ENCODE measurements at regions of chr13 and their contacts with region 1.

Region 1: DNA sequence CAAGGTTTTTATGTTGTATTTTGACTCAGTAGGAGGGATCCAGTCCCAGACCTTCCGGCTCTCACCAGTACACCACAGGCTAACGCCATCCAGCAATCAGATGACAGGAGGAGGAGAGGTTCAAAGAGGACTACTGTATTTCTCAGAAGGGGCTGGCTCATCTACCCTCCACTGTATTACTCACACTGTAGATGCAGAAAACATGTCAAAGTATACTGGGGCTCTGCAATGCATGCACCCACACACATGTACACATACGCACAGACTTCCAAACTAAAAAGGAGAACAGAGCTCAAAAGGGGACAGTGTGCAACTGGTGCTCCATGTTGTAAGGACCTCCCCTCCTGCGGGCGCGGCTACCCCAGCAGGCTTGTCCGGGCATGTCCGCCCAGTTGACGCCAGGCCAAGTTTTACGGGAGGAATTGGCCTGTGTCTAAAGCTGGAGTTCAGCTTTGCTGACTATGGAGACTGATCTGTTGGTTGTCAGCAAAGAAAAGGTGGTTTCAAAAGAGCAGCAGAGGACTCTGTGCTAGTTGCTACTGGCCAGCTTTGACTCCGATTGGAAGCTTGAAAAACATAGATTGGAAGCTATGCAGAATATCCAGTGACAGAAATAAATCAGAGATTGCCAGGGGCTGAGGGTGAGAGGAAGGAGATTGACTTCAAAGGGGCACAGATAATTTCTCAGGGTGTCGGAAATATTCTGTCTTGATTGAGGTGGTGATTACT is 314.2 kb downstream of the DLEU7 start:
- DNase-seq: peak; percentile 94
- ATAC-seq: peak; percentile 95

Region 2: DNA sequence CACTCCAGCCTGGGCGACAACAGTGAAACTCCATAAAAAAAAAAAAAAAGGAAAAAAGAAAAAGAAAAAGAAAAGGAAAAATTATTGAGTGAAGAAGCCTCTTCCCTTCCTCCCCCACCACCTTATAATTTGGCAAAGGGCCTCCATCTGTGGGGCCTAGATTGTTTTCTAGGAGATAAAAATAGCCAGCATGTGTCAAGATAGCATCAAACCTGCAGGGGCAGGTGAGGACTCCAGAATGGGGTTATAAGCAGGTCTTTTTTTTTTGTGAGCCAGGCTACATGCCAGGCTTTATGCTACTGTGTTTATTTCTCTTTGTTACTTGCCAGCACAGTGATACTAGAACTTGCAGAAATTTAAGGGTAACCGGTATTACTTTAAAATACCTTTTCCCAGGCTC is 544.2 kb before region 1 on chr13:
- intact Hi-C with region 1: loop called (anchors 10 kb)
- DNase-seq: no peak
- ATAC-seq: peak; percentile 46

Region 3: DNA sequence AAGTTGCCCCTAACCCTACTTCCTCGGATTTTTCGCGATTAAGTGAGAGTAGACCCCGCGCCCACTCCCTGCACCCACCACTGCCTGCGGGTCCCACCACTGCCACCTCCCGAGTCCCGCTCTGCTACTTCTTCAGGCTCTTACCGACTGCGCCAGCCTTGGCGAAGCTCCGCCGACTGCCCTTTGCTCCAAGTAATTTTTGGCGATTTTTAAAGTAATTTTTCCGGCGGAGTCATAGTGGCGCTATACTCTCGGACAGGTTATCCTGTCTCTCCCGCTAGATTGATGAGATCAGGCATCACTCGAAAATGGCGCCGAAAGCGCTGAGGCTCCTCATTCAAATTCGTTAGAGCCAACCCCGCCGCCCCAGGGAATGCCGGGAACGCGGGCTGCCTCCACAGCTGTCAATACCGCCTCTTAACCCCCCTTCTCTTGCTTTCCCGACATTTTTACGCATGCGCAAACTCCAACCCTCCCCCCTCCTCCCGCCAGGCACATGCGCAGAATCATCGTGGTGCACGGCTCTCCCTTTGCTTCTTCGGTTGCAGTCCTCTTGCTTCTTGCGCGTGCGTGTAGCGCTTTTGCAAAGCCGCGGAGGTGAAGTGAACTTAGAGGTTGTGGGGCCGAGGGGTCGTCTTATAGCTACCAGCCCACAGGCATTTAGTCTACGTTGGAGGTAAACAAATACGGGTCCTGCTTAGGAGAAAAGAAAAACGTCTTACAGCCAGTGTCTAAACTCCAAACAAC is 447.5 kb before region 1 on chr13:
- intact Hi-C with region 1: loop called (anchors 10 kb)
- DNase-seq: peak; percentile 98
- ATAC-seq: peak; percentile 97

Region 4: DNA sequence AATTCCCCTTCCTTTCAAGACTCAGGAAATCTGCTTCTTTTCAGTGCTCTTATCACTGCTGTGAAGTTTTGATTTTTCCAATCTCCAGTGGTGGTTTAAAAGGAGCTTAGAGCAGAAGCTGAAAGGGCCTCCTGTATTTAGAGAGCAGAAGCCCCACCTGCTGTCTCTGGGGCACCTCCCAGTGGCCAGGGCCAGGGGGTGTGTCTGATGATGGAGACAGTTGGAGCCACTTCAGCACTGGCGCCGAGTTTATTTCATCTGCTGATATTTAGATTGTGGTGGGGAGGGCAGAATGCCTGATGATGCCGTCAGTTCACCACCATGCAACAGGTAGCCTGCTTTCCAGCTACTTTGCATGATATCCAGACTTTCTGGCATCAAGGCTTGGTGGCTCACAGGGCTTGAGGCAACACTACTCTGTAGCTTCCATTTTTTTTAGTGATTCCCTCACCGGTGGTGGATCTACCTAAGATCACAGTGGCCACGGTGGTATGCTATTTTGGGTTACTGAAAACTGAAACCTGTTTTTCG is 142.2 kb before region 1 on chr13:
- intact Hi-C with region 1: loop called (anchors 10 kb)
- DNase-seq: peak; percentile 76
- ATAC-seq: peak; percentile 96

Region 5: DNA sequence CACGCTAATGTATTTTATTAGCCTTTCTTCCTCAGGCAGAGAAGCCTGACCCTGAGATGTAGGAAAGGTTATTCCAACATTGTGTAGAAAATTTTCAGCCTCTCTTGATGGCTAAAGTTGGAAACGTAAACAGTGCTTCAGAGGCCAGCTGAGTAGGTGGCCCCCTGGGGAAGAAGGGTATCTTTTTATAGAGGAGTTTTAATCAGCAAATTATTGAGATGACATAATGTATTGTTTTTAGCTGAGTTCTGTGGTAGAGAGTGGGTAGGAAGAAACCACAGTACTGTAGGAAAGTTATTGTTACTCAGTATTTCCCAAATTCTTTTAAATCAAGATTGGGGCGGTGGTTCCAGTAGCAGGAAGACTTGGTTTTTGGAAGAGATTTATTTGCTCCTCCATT is 45.4 kb after region 1 on chr13:
- intact Hi-C with region 1: no loop called
- DNase-seq: no peak
- ATAC-seq: no peak

Region 6: GRCh38 chr13:50801087-50801931 is 272.0 kb after region 1 on chr13:
- intact Hi-C with region 1: loop called (anchors 10 kb)
- DNase-seq: peak; percentile 33
- ATAC-seq: peak; percentile 96

Region 7: GRCh38 chr13:50911937-50912795 is 382.8 kb after region 1 on chr13:
- intact Hi-C with region 1: loop called (anchors 10 kb)
- DNase-seq: peak; percentile 91
- ATAC-seq: peak; percentile 54

Measured in Right ventricle myocardium superior (tissue), 1 donor.